T-cell (primary cell): ENCODE measurements at regions of chr7 and their contacts with region 1.

Region 1: DNA sequence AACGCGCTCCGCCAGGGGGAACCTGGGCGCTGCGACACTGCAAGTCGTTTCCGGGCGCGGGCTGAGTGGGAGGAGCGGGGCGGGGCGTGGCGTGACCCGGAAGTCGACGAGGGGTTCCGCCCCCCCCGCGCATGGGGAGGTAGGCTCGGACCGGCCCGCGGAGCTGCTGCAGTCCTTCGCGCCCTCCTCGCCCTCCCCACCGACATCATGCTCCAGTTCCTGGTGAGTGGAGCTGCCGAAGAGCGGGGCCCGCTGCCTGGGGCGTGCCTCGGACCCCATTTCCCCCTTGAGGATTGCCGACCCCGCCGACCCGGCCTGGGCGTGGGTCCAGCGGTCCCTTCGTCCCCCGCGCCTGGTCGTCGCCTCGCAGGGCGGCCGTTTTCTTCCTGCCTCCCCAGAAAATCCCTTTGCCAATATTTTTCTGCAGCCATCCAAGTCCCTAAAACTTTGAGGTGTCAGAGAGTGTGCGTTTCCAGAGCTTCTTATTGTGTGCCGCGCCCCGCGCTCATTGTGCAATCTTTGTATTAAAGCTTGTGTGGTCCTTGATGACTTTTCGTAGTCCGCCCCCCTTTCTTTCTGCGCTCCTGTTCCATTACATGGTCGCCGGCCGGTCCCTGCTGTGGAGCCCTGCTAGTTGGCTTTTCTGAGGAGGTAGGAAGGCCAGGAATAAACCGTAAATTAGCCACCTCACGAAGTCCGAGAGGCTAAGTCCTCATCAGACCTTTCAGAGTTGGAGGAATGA is at the start of gene STMP1:
- DNase-seq: peak; percentile 85 to 98 (median 93)
- ATAC-seq: peak; percentile 97 to 98 (median 97)
- H3K4me3 ChIP-seq: peak within 1 kb of the TSS; percentile 88 to 93
- H3K4me3 Mint-ChIP-seq: peak within 1 kb of the TSS; percentile 90 to 97 (median 93)
- H3K27ac ChIP-seq: peak within 1 kb of the TSS; percentile 71
- H3K27ac Mint-ChIP-seq: peak within 1 kb of the TSS; percentile 81 to 91
- H3K4me1 ChIP-seq: peaks cover 0 to 19% of the 10 kb centered on the region in 2 experiments
- H3K4me1 Mint-ChIP-seq: peaks cover 45 to 47% (median 46%) of the 10 kb centered on the region in 3 donors
- H3K27me3 ChIP-seq: no peaks in the 10 kb centered on the region
- H3K27me3 Mint-ChIP-seq: no peaks in the 10 kb centered on the region
- total RNA-seq, gene STMP1: 15.2 to 23.0 (median 21.5) TPM

Region 2: DNA sequence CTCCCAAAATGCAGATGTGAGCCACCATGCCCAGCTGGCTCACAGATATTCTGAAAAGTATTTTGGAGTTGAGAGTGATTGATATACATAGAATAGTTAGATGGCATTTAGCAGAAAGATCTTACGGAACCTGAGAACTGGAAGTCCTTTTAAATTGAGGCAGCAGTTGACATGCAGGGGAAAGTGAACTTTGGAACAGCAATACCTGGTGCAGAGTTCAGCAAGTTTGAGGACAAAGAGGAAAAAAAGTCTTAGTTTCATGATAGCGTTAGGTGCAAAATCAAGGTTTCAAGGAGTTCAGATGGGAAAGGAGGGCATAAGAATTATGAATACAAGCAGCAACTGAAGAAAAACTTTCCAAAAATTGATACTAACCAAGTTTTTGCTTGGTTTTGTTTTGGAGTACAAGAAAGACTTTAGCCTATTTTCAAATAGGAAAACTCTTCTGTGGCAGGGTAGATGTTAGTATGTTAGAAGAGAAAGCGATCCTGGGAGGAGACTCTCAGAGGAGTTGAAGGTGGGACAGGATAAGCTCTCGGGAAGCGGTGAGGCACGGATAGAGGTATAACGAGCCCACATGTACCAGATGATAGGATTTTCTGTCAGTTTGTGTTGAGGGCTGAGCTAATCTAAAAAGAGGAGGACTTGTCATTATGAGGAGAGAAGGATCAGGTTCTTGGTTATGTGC is 28.2 kb before region 1 on chr7:
- CTCF ChIA-PET with region 1: interaction called in 1 of 2 experiments, 12 read pairs
- POLR2A ChIA-PET with region 1: interaction called in 1 of 2 experiments, 3 read pairs
- DNase-seq: no peak
- ATAC-seq: no peak
- H3K4me3 ChIP-seq: no peak overlapping the region
- H3K4me3 Mint-ChIP-seq: no peak overlapping the region
- H3K27ac ChIP-seq: no peak overlapping the region
- H3K27ac Mint-ChIP-seq: no peak overlapping the region
- H3K4me1 ChIP-seq: no peaks in the 10 kb centered on the region
- H3K4me1 Mint-ChIP-seq: no peaks in the 10 kb centered on the region
- H3K27me3 ChIP-seq: no peaks in the 10 kb centered on the region
- H3K27me3 Mint-ChIP-seq: no peaks in the 10 kb centered on the region